GM10248 (cell line): ENCODE measurements at regions of chr10 and their contacts with region 1.

Region 1: DNA sequence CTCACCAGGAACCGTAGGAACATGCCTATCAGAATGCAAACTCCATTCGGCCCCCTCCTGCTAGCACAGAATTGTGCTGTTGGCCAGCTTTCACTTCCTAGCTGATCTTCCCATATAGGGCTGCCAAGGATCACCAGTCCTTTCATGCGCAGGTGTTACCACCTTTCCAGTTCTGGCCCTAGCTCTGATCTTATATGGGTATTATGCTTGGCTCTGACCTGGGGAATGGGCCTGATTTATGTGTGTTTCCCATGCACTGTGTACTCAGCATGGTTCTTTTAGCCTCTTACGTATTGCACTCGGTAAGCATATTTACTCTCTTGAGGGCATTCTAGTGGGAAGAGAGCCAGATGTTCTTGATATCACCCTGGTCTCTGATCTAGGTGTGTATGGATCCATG is 11.1 kb downstream of the SLC35G1 start:
- DNase-seq: no peak
- CTCF ChIP-seq: no peak

Region 2: GRCh38 chr10:93838278-93838677 is 66.6 kb before region 1 on chr10:
- CTCF ChIA-PET with region 1: no interaction called
- POLR2A ChIA-PET with region 1: no interaction called
- DNase-seq: no peak
- CTCF ChIP-seq: no peak

Region 3: DNA sequence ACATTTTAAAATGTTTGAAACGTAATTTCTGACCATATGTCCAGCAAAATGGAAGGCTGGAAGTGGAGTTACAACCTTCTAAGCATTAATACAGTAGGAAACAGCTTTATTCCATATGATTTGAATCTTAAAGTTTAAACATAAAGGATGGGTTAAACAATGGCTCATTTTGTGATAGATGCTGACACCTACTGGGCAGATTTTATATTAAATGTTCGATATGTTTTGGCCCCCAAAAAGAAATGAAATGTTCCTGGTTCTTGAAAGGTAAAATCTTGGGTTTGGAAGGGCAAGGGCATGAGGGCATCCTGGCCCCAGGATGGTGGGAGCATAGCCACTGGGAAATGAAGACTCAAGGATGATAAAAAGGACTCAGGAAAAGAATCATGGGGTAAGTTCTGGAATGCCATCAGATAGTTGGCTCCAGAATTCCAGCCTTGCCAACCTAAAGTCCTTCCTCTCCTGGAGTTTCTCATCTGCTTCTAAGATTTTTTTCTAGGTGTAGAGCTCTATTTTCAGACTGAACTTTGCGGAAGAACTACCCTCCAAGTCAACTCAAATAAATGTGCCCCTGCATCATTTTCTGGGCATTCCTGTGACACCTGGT is 45.7 kb before region 1 on chr10:
- CTCF ChIA-PET with region 1: no interaction called
- POLR2A ChIA-PET with region 1: no interaction called
- DNase-seq: no peak
- CTCF ChIP-seq: peak; percentile 1

Region 4: DNA sequence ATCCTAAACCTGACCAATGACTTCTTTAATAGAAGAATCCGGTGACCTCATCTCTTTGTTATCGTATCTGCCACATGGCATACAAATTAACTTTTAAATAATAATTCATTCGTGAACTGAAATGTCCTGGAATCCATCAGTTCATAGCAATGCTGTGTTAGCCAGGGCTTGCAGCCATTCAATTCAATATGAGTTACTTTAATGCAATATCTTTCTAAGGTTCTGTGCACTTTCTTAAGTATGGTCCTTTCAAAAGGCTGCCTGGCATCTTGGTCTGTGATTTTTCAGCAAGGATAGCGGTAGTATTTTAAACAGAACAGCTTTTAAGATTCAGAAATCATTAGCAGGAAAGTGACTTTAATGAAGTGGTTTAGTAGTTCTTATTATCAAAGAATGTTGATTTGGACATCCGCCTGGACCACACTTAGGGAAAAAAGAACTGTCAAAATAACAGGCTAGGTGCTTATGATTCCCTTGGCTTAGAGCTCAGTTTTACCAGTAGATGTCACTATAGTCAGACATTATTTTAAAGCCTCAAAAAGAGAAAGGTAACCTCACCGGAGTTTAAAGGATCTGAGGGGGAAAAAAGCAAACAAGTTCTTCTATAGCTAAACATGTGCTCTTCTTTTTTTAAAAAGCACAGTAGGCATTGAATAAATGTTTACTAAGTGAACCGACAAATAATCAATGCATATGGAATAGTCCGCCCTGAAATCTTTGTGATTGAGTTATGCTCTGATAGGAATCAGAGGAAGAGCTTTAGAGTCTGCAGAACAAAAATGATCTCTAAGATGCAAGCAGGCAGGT is 11.6 kb after region 1 on chr10:
- CTCF ChIA-PET with region 1: interaction called, 21 read pairs
- POLR2A ChIA-PET with region 1: no interaction called
- DNase-seq: no peak
- CTCF ChIP-seq: peak; percentile 47